ENCODE measurements at regions of chr10 and their contacts with region 1.

Region 1: DNA sequence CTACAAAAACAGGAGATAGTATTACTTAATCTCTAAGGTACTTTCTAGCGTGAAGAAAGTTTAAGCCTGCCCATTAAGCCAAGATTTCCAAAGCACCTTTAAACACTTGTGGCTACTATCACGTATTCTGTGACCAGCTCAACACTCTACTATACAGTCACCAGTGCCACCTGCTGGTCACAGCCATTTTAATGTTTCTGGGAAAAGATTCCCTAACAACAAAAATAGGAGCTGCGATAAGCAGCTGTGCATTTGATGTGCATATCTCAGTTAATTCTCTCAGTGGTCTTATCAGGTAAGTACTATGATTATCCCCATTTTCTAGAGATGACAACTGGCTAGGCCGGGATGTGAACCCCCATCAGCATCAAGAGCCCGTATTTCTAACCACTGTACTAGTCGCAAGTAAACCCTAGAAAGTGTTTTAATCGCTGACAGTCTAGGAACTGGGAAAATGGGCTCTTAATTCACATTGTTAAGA is 860 bp downstream of the SEC31B start:
- DNase-seq: no peak
- ATAC-seq: peak; percentile 78
- H3K4me3 ChIP-seq: no peak overlapping the region
- H3K27ac ChIP-seq: no peak overlapping the region
- H3K4me1 ChIP-seq: no peaks in the 10 kb centered on the region
- H3K27me3 ChIP-seq: no peaks in the 10 kb centered on the region
- CTCF ChIP-seq: peak; percentile 55 to 74 (median 67); a peak in 5 of 6 replicates
- EP300 ChIP-seq: no peak
- POLR2A ChIP-seq: no peak
- RAD21 ChIP-seq: peak; percentile 54

Region 2: GRCh38 chr10:100327007-100327717 is 191.6 kb before region 1 on chr10:
- CTCF ChIA-PET with region 1: interaction called, 11 read pairs
- POLR2A ChIA-PET with region 1: no interaction called
- RAD21 ChIA-PET with region 1: interaction called, 5 read pairs
- SMC1A ChIA-PET with region 1: interaction called, 3 read pairs
- in situ Hi-C with region 1: no loop called
- intact Hi-C with region 1: no loop called
- DNase-seq: peak; percentile 90
- ATAC-seq: peak; percentile 100
- H3K4me3 ChIP-seq: no peak overlapping the region; the same call in 1 of the 2 replicates
- H3K27ac ChIP-seq: peak overlapping the region; percentile 70
- H3K4me1 ChIP-seq: peaks cover 15% of the 10 kb centered on the region
- H3K27me3 ChIP-seq: no peaks in the 10 kb centered on the region; a peak in 1 of 4 replicates
- CTCF ChIP-seq: no peak
- EP300 ChIP-seq: peak in 1 of 2 experiments; percentile 57; a peak in 1 of 4 replicates
- POLR2A ChIP-seq: peak; percentile 19; the same call in 1 of the 2 replicates
- RAD21 ChIP-seq: no peak

Region 3: GRCh38 chr10:100346765-100347567 is 171.8 kb before region 1 on chr10 and contains the start of gene SCD:
- CTCF ChIA-PET with region 1: interaction called, 28 read pairs
- POLR2A ChIA-PET with region 1: no interaction called
- RAD21 ChIA-PET with region 1: interaction called, 4 read pairs
- SMC1A ChIA-PET with region 1: interaction called, 4 read pairs
- in situ Hi-C with region 1: no loop called
- intact Hi-C with region 1: no loop called
- DNase-seq: peak; percentile 93
- ATAC-seq: peak; percentile 93
- H3K4me3 ChIP-seq: peak within 1 kb of the TSS; percentile 86
- H3K27ac ChIP-seq: peak within 1 kb of the TSS; percentile 72
- H3K4me1 ChIP-seq: peaks cover 18% of the 10 kb centered on the region
- H3K27me3 ChIP-seq: no peaks in the 10 kb centered on the region
- CTCF ChIP-seq: no peak
- EP300 ChIP-seq: 0 out of 4 replicates have a peak, but pooled peaks of 1 of the 2 experiments have one; percentile 10
- POLR2A ChIP-seq: peak; percentile 72
- RAD21 ChIP-seq: no peak
- polyA plus RNA-seq, gene SCD: 77.5 to 86.1 TPM

Region 4: GRCh38 chr10:100438674-100439315 is 80.0 kb before region 1 on chr10:
- CTCF ChIA-PET with region 1: interaction called, 48 read pairs
- POLR2A ChIA-PET with region 1: no interaction called
- RAD21 ChIA-PET with region 1: interaction called, 15 read pairs
- SMC1A ChIA-PET with region 1: interaction called, 15 read pairs
- in situ Hi-C with region 1: no loop called
- intact Hi-C with region 1: no loop called
- DNase-seq: no peak
- ATAC-seq: no peak
- H3K4me3 ChIP-seq: no peak overlapping the region
- H3K27ac ChIP-seq: no peak overlapping the region
- H3K4me1 ChIP-seq: no peaks in the 10 kb centered on the region
- H3K27me3 ChIP-seq: no peaks in the 10 kb centered on the region
- CTCF ChIP-seq: no peak
- EP300 ChIP-seq: no peak
- POLR2A ChIP-seq: no peak
- RAD21 ChIP-seq: no peak

Region 5: GRCh38 chr10:100481462-100482081 is 37.2 kb before region 1 on chr10:
- CTCF ChIA-PET with region 1: interaction called, 49 read pairs
- POLR2A ChIA-PET with region 1: no interaction called
- RAD21 ChIA-PET with region 1: interaction called, 9 read pairs
- SMC1A ChIA-PET with region 1: interaction called, 13 read pairs
- in situ Hi-C with region 1: no loop called
- intact Hi-C with region 1: no loop called
- DNase-seq: peak; percentile 84
- ATAC-seq: peak; percentile 99
- H3K4me3 ChIP-seq: peak overlapping the region; percentile 61; the same call in 1 of the 2 replicates
- H3K27ac ChIP-seq: no peak overlapping the region
- H3K4me1 ChIP-seq: peaks cover 5% of the 10 kb centered on the region
- H3K27me3 ChIP-seq: peaks cover 0 to 6% of the 10 kb centered on the region in 2 experiments; a peak in 1 of 4 replicates
- CTCF ChIP-seq: no peak
- EP300 ChIP-seq: no peak
- POLR2A ChIP-seq: no peak
- RAD21 ChIP-seq: no peak

Region 6: DNA sequence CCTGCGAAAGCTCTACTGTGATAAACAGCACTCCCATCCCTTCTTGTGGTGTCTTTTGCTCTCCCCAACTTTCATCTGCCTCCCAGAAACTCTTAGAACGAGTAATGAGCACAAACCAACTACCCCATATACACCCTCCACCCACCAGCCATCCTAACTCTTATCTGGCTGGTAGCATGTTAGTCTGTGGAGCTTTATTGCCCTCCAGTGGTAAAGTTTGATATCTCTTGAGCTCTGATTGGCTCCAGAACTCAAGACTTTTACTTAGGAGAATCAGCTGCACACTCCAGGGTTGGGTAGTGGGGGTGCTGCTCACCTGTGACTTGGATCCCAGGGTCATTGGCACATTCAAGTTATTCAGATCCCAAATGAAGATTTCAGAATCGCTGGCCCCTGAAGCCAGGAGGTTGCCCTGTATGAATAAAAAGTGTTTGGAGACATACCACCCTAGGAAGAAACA is 10.1 kb before region 1 on chr10:
- CTCF ChIA-PET with region 1: interaction called, 40 read pairs
- POLR2A ChIA-PET with region 1: no interaction called
- RAD21 ChIA-PET with region 1: interaction called, 7 read pairs
- SMC1A ChIA-PET with region 1: interaction called, 10 read pairs
- in situ Hi-C with region 1: no loop called
- intact Hi-C with region 1: no loop called
- DNase-seq: no peak
- ATAC-seq: peak; percentile 94
- H3K4me3 ChIP-seq: no peak overlapping the region
- H3K27ac ChIP-seq: no peak overlapping the region
- H3K4me1 ChIP-seq: peaks cover 8% of the 10 kb centered on the region; the same call in 1 of the 2 replicates
- H3K27me3 ChIP-seq: no peaks in the 10 kb centered on the region
- CTCF ChIP-seq: peak; percentile 34 to 64 (median 51)
- EP300 ChIP-seq: no peak
- POLR2A ChIP-seq: no peak
- RAD21 ChIP-seq: peak; percentile 62

Region 7: DNA sequence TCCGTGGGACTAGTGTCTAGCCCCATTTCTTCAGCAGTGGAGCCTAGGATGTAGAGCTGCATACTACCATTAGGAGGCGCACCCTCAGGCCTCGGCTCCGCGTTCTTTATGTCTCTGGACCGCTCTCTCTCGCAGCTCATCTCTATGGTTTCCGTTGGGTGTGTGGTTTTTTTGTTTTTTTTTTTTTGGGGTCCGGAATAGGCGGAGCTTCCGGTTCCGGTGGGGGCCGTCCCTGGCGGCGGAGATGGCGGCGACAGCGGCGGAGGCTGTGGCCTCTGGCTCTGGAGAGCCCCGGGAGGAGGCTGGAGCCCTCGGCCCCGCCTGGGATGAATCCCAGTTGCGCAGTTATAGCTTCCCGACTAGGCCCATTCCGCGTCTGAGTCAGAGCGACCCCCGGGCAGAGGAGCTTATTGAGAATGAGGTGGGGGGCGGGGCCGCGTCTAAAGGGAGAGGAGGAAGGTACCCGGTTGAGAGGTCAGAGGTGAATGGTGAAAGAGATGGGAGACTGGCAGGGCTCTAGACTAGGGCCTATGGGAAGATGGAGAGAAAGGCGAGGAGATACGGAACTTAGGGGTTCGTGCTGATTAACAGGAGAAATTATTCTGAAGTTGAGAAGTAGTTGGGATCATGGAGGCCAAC is 17.0 kb after region 1 on chr10 and contains the start of gene HIF1AN:
- CTCF ChIA-PET with region 1: interaction called, 22 read pairs
- POLR2A ChIA-PET with region 1: interaction called, 3 read pairs
- RAD21 ChIA-PET with region 1: no interaction called
- SMC1A ChIA-PET with region 1: interaction called, 8 read pairs
- in situ Hi-C with region 1: no loop called
- intact Hi-C with region 1: no loop called
- DNase-seq: peak; percentile 85
- ATAC-seq: peak; percentile 97
- H3K4me3 ChIP-seq: peak within 1 kb of the TSS; percentile 95
- H3K27ac ChIP-seq: peak within 1 kb of the TSS; percentile 45
- H3K4me1 ChIP-seq: peaks cover 11% of the 10 kb centered on the region
- H3K27me3 ChIP-seq: no peaks in the 10 kb centered on the region
- CTCF ChIP-seq: peak; percentile 94 to 98 (median 94)
- EP300 ChIP-seq: no peak
- POLR2A ChIP-seq: peak; percentile 95
- RAD21 ChIP-seq: no peak
- polyA plus RNA-seq, gene HIF1AN: 1.9 to 2.2 TPM

Region 8: GRCh38 chr10:100579261-100580090 is 60.7 kb after region 1 on chr10:
- CTCF ChIA-PET with region 1: no interaction called
- POLR2A ChIA-PET with region 1: no interaction called
- RAD21 ChIA-PET with region 1: no interaction called
- SMC1A ChIA-PET with region 1: no interaction called
- in situ Hi-C with region 1: no loop called
- intact Hi-C with region 1: no loop called
- DNase-seq: no peak
- ATAC-seq: no peak
- H3K4me3 ChIP-seq: no peak overlapping the region
- H3K27ac ChIP-seq: no peak overlapping the region
- H3K4me1 ChIP-seq: no peaks in the 10 kb centered on the region
- H3K27me3 ChIP-seq: peaks cover 1 to 2% of the 10 kb centered on the region in 2 experiments; a peak in 2 of 4 replicates
- CTCF ChIP-seq: no peak
- EP300 ChIP-seq: no peak
- POLR2A ChIP-seq: no peak
- RAD21 ChIP-seq: no peak

Region 9: GRCh38 chr10:100807241-100807951 is 288.6 kb after region 1 on chr10:
- CTCF ChIA-PET with region 1: no interaction called
- POLR2A ChIA-PET with region 1: no interaction called
- RAD21 ChIA-PET with region 1: no interaction called
- SMC1A ChIA-PET with region 1: no interaction called
- in situ Hi-C with region 1: no loop called
- intact Hi-C with region 1: no loop called
- DNase-seq: no peak
- ATAC-seq: no peak
- H3K4me3 ChIP-seq: no peak overlapping the region
- H3K27ac ChIP-seq: no peak overlapping the region
- H3K4me1 ChIP-seq: no peaks in the 10 kb centered on the region
- H3K27me3 ChIP-seq: peaks cover 3 to 19% of the 10 kb centered on the region in 2 experiments; a peak in 3 of 4 replicates
- CTCF ChIP-seq: no peak
- EP300 ChIP-seq: no peak
- POLR2A ChIP-seq: no peak
- RAD21 ChIP-seq: no peak